ENCODE measurements at regions of chr20 and their contacts with region 1.

Region 1: DNA sequence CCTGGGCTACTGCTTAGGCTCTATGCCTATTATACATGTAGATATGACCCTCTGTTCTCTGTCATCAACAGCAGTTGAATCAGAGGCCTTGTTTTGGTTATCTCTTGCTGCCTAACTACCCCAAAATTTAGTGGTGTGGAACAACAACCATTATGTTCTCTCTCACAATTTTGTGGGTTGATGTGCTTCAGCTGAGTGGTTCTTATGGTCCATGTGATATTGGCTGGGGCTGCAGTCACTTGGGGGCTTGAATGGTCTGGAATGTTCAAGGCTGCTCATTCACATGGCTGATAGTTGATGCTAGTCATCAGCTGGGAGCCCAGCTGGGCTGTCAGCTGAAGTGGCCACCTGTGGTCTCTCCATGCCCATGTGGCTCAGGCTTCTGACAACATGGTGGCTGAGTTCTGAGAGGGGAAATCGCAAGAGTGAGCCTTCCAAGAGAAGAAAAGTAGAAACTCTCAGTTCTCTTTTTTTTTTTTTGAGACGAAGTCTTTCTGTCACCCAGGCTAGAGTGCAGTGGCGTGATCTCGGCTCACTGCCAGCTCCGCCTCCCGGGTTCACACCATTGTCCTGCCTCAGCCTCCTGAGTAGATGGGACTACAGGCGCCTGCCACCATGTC is 47.8 kb downstream of the SHLD1 start:
- DNase-seq: no peak
- ATAC-seq: no peak
- H3K4me3 ChIP-seq: no peak overlapping the region
- H3K27ac ChIP-seq: no peak overlapping the region
- H3K4me1 ChIP-seq: no peaks in the 10 kb centered on the region
- H3K27me3 ChIP-seq: no peaks in the 10 kb centered on the region
- CTCF ChIP-seq: no peak

Region 2: GRCh38 chr20:6000871-6001270 is 202.9 kb after region 1 on chr20:
- CTCF ChIA-PET with region 1: no interaction called
- POLR2A ChIA-PET with region 1: no interaction called
- intact Hi-C with region 1: loop called (anchors 5 kb)
- DNase-seq: no peak
- ATAC-seq: no peak
- H3K4me3 ChIP-seq: no peak overlapping the region
- H3K27ac ChIP-seq: no peak overlapping the region
- H3K4me1 ChIP-seq: peaks cover 8% of the 10 kb centered on the region; the same call in 1 of the 2 replicates
- H3K27me3 ChIP-seq: no peaks in the 10 kb centered on the region
- CTCF ChIP-seq: no peak

Measured in PC-3 (cell line).